ENCODE measurements at regions of chr10 and their contacts with region 1.

Region 1: DNA sequence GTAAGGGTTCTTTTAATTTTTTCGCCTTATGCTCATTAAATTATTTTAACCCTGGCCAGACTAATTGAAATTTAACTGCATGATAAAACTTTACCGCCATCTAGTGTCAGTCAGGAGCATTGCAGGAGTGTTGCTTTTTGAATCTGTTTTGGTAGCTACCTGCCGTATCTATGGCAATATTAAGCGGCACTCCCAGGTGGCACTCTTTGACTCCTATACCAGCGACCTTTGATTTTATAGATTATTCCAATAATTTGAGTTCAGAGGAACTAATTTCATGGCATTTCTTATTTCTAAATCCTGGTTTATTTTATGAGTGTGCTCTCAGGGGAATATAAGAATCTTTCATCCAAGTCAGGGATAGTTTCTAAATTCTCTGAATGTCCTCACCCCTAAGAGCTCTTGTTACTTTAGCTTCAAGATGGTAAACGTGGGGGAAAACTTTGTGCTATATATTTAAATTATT is 198.9 kb downstream of the REEP3 start:
- DNase-seq: peak; percentile 71
- H3K4me3 ChIP-seq: no peak overlapping the region
- H3K27ac ChIP-seq: peak overlapping the region; percentile 67
- H3K4me1 ChIP-seq: peaks cover 63% of the 10 kb centered on the region
- H3K27me3 ChIP-seq: no peaks in the 10 kb centered on the region
- CTCF ChIP-seq: peak; percentile 96

Region 2: DNA sequence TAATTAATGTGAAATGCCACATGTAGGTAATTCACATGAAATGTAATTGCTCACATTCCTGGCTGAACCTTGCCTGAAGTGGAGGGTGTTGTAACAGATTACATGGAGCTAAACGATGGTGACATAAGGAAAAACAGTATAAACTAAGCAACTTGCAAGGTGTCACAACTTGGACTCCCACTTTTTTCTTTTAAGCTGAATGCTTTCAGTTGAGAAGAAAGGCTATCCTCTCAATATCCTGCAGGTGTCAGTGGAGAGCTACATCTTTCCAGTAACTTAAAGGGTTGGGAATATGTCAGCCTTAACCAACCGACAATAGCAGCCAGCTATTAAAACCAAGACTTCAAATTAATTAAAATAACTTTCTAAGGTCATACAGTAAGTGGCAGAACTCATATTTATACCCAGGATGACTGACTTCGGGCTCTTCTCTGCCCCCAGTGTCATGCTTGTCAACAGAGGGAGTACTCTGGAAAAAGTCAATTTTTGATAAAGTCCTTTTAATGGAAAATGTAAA is 553.3 kb before region 1 on chr10:
- CTCF ChIA-PET with region 1: interaction called, 37 read pairs
- POLR2A ChIA-PET with region 1: no interaction called
- intact Hi-C with region 1: loop called (anchors 1 kb)
- DNase-seq: peak; percentile 89
- H3K4me3 ChIP-seq: no peak overlapping the region
- H3K27ac ChIP-seq: no peak overlapping the region
- H3K4me1 ChIP-seq: peaks cover 36% of the 10 kb centered on the region
- H3K27me3 ChIP-seq: no peaks in the 10 kb centered on the region
- CTCF ChIP-seq: peak; percentile 84

Region 3: DNA sequence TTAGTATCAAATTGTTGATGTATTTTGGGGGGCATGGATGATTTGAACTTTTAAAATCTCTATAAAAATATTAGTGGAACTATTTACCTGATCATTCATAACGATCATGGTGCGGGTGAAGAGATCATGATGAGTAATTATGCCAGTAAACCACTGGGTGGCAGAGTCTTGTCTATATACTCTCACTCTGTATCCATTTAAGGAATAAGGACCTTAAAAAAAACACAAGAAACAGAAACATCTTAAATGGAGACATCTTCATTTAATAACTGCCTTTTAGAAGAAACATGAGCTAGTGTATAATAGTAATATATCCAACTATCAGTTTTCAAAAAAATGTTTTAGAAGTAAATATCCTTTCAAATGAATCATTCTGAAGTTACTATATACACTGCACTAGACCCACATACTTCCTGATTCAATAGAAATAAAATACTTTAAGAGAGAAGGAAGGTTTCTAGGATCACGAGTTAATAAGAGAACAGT is 502.9 kb before region 1 on chr10:
- CTCF ChIA-PET with region 1: no interaction called
- POLR2A ChIA-PET with region 1: no interaction called
- intact Hi-C with region 1: loop called (anchors 5 kb)
- DNase-seq: peak; percentile 71
- H3K4me3 ChIP-seq: no peak overlapping the region
- H3K27ac ChIP-seq: no peak overlapping the region
- H3K4me1 ChIP-seq: peaks cover 42% of the 10 kb centered on the region
- H3K27me3 ChIP-seq: no peaks in the 10 kb centered on the region
- CTCF ChIP-seq: peak; percentile 80

Region 4: DNA sequence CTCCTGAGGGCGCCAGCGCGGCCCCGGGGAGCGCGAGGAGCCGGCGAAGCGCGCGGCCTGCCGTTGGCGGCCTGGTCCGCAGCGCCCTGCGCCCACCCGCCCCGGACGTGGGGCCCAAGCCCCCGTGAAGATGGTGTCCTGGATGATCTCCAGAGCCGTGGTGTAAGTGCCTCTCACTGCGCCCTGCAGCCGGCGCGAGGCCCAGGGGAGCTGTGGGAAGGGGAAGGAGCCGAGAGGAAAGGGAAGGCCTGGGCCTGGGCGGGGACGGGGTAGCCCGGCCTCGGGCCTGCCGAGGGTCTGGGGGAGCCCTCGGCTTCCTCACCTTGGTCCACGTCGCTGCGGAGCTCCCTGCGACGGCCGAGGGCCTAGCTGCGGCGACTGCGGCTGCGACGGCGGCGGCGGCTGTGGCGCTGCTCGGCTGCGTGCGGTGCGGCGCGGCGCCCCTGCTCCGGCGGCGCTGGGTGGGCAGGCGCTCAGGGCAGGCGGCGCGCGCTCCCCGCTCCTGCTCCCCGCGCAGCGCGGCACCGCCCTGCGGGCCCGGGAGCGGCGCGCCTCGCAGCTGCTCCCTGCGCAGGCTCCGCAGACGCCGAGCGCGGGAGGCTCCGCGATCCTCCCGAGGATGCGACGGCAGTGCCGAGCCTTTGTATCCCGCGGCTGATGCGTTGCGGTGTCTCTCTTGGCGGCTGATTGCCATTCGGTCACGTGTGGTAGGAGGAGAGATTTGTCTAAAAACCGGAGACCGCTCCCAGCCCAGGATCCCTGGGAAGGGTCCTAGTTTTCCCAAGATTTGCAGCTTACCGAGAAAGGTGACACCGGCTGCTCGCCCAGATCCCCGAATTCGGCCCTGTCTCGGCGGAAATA is 198.5 kb before region 1 on chr10:
- CTCF ChIA-PET with region 1: no interaction called
- POLR2A ChIA-PET with region 1: no interaction called
- intact Hi-C with region 1: loop called (anchors 5 kb)
- DNase-seq: peak; percentile 89
- H3K4me3 ChIP-seq: peak overlapping the region; percentile 63
- H3K27ac ChIP-seq: peak overlapping the region; percentile 97
- H3K4me1 ChIP-seq: peaks cover 45% of the 10 kb centered on the region
- H3K27me3 ChIP-seq: no peaks in the 10 kb centered on the region
- CTCF ChIP-seq: no peak

Region 5: GRCh38 chr10:63767138-63767801 is 47.2 kb after region 1 on chr10:
- CTCF ChIA-PET with region 1: interaction called, 9 read pairs
- POLR2A ChIA-PET with region 1: no interaction called
- intact Hi-C with region 1: loop called (anchors 5 kb)
- DNase-seq: peak; percentile 71
- H3K4me3 ChIP-seq: no peak overlapping the region
- H3K27ac ChIP-seq: no peak overlapping the region
- H3K4me1 ChIP-seq: peaks cover 32% of the 10 kb centered on the region
- H3K27me3 ChIP-seq: no peaks in the 10 kb centered on the region
- CTCF ChIP-seq: peak; percentile 70

Measured in A673 (cell line).